CD8-positive, alpha-beta memory T cell (primary cell): ENCODE measurements at regions of chr6 and their contacts with region 1.

Region 1: GRCh38 chr6:116279260-116280063 is at the start of gene TSPYL1:
- DNase-seq: peak; percentile 89 to 98 (median 96)
- H3K4me3 ChIP-seq: peak within 1 kb of the TSS; percentile 90
- H3K4me3 Mint-ChIP-seq: peak within 1 kb of the TSS; percentile 91 to 99 (median 98)
- H3K27ac ChIP-seq: peak within 1 kb of the TSS; percentile 100
- H3K27ac Mint-ChIP-seq: peak within 1 kb of the TSS; percentile 98 to 100 (median 100)
- H3K4me1 ChIP-seq: peaks cover 57% of the 10 kb centered on the region
- H3K4me1 Mint-ChIP-seq: peaks cover 52 to 66% (median 65%) of the 10 kb centered on the region in 3 donors
- H3K27me3 ChIP-seq: no peaks in the 10 kb centered on the region
- H3K27me3 Mint-ChIP-seq: no peaks in the 10 kb centered on the region
- total RNA-seq, gene TSPYL1: 56.6 to 57.4 TPM

Region 2: DNA sequence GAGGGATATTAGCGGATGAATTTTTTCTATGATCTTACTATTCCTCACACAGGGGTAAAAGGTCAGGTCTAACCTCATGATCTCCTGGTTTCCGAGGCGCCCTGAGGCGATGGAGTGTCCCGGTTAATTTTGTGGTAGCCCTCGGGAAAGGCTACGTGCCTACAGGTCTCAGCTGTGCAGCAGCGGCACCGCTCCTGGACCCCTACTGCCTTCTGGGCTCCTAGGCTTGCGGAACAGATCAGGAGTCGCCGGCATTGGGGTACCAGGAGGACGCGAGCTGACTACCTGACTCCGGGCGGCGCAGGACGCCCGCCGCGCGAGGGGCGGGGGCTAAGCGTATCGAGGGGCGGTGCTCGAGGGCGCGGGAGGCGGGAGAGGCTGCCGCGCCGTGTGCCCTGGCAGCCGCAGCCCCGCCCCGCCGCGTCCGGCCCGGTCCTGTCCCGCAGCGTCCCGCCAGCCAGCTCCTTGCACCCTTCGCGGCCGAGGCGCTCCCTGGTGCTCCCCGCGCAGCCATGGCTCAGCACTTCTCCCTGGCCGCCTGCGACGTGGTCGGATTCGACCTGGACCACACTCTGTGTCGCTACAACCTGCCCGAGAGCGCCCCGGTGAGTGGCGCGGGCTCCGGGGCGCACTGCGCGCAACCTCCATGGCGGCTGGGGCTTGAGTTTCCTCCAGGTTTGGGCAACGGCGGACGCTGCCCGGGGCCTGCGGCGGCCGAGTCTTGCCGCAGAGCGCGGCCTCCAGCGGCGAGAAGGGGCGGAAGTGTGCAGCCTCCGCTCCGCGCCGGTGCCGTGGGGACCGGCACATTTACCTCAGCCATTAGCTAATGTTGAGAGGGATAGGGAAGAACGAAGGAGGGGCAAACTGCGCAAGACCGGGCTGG is 178.8 kb before region 1 on chr6 and contains the start of gene NT5DC1:
- CTCF ChIA-PET with region 1: no interaction called
- POLR2A ChIA-PET with region 1: interaction called, 10 read pairs
- DNase-seq: peak; percentile 75 to 87 (median 81)
- H3K4me3 ChIP-seq: peak within 1 kb of the TSS; percentile 75
- H3K4me3 Mint-ChIP-seq: peak within 1 kb of the TSS; percentile 91 to 98 (median 95)
- H3K27ac ChIP-seq: peak within 1 kb of the TSS; percentile 86
- H3K27ac Mint-ChIP-seq: peak within 1 kb of the TSS; percentile 53 to 97 (median 94)
- H3K4me1 ChIP-seq: peaks cover 28% of the 10 kb centered on the region
- H3K4me1 Mint-ChIP-seq: peaks cover 45 to 59% (median 57%) of the 10 kb centered on the region in 3 donors
- H3K27me3 ChIP-seq: no peaks in the 10 kb centered on the region
- H3K27me3 Mint-ChIP-seq: peaks cover 0 to 2% of the 10 kb centered on the region in 2 donors
- total RNA-seq, gene NT5DC1: 46.3 to 47.6 TPM

Region 3: DNA sequence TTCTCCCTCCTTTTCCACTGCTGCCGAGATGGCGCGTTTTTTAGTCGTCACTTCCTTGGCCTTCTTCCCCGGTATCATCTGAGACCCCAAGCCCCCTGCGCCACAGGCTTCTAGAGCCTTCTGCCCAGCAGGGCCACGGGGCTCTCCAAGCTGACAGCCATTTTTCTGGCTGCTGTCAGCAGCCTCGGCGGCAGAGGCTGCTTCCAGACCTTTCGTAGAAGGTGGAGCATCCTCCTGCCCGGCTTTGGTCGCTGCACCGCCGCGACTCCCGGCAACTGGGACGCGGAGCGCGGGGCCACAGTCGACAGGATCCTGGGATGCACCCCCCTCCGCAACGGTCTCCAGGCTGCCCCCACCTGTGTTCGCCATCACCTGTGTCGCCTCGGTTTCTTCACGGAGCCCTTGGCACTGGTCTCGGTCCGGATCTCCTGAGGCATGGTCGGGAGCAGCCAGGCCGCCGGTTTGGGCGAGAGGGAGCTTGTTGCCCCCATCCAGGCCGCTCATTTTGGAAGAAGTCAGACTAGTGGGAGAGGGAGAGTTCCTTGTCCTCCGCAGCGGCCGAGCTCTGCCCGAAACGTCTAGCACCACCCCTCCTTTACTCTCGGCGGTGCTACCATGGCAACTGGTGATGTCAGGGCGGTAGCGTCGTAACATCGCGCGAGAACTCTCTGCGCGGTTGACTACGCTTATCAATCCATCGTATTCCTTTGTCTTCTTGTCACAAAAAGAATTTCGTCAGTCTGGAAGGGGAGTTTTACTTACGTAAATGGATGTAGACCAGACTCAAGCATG is 25.8 kb before region 1 on chr6 and contains the start of gene TSPYL4:
- CTCF ChIA-PET with region 1: interaction called, 14 read pairs
- POLR2A ChIA-PET with region 1: interaction called, 39 read pairs
- DNase-seq: peak; percentile 88 to 96 (median 92)
- H3K4me3 ChIP-seq: peak within 1 kb of the TSS; percentile 87
- H3K4me3 Mint-ChIP-seq: no peak within 1 kb of the TSS
- H3K27ac ChIP-seq: peak within 1 kb of the TSS; percentile 95
- H3K27ac Mint-ChIP-seq: peak within 1 kb of the TSS in 1 of 8 donors; percentile 95
- H3K4me1 ChIP-seq: peaks cover 41% of the 10 kb centered on the region
- H3K4me1 Mint-ChIP-seq: peaks cover 7 to 30% (median 8%) of the 10 kb centered on the region in 3 donors
- H3K27me3 ChIP-seq: no peaks in the 10 kb centered on the region
- H3K27me3 Mint-ChIP-seq: no peaks in the 10 kb centered on the region
- total RNA-seq, gene TSPYL4: 19.3 to 19.9 TPM

Region 4: GRCh38 chr6:116268589-116269293 is 10.7 kb before region 1 on chr6:
- CTCF ChIA-PET with region 1: interaction called, 29 read pairs
- POLR2A ChIA-PET with region 1: interaction called, 19 read pairs
- DNase-seq: peak in 2 of 5 donors; percentile 44 to 48
- H3K4me3 ChIP-seq: no peak overlapping the region
- H3K4me3 Mint-ChIP-seq: no peak overlapping the region
- H3K27ac ChIP-seq: no peak overlapping the region
- H3K27ac Mint-ChIP-seq: peak overlapping the region in 7 of 8 donors; percentile 34 to 77 (median 64)
- H3K4me1 ChIP-seq: no peaks in the 10 kb centered on the region
- H3K4me1 Mint-ChIP-seq: peaks cover 27 to 58% (median 53%) of the 10 kb centered on the region in 3 donors
- H3K27me3 ChIP-seq: no peaks in the 10 kb centered on the region
- H3K27me3 Mint-ChIP-seq: peaks cover 0 to 1% of the 10 kb centered on the region in 2 donors

Region 5: DNA sequence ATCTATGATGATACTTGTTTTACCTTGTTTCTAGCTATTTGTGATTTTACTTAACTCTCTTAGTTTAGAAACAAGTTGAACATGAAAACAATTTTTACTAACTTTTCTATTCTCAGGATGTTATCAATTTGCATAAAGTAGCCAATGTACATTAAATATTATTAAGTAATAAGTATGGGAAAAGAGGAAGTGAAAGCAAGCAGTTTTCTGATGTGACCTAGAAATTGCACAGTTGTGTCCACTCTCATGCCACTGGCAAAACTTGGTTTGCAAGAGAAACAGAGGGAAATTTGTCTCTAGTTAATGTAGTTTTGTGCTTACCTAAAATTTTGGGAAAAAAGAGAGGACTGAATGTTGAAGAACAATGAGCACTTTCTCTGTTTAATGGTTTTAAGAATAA is 19.5 kb after region 1 on chr6:
- CTCF ChIA-PET with region 1: no interaction called
- POLR2A ChIA-PET with region 1: no interaction called
- DNase-seq: no peak
- H3K4me3 ChIP-seq: no peak overlapping the region
- H3K4me3 Mint-ChIP-seq: no peak overlapping the region
- H3K27ac ChIP-seq: no peak overlapping the region
- H3K27ac Mint-ChIP-seq: no peak overlapping the region
- H3K4me1 ChIP-seq: no peaks in the 10 kb centered on the region
- H3K4me1 Mint-ChIP-seq: peaks cover 0 to 3% (median 0%) of the 10 kb centered on the region in 3 donors
- H3K27me3 ChIP-seq: no peaks in the 10 kb centered on the region
- H3K27me3 Mint-ChIP-seq: peaks cover 0 to 1% of the 10 kb centered on the region in 2 donors

Region 6: DNA sequence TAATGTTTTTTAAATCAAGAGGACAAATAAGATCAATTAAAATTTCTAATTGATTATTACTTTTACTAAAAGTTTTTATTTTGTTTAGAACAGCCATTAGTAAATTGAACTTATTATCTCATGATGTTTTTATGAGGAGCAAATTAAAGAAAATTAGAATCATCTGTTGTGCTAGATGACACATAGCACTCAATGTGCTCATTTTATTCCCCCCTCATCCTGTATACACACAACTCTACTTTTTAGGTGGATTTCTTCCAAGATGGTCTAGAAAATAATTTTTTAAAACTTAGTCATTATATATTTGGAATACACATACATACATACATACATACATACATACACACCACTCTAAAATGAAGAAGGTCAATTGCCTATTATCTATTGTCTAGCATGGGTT is 29.5 kb after region 1 on chr6:
- CTCF ChIA-PET with region 1: no interaction called
- POLR2A ChIA-PET with region 1: no interaction called
- DNase-seq: no peak
- H3K4me3 ChIP-seq: no peak overlapping the region
- H3K4me3 Mint-ChIP-seq: no peak overlapping the region
- H3K27ac ChIP-seq: no peak overlapping the region
- H3K27ac Mint-ChIP-seq: no peak overlapping the region
- H3K4me1 ChIP-seq: no peaks in the 10 kb centered on the region
- H3K4me1 Mint-ChIP-seq: no peaks in the 10 kb centered on the region
- H3K27me3 ChIP-seq: no peaks in the 10 kb centered on the region
- H3K27me3 Mint-ChIP-seq: peaks cover 0 to 3% of the 10 kb centered on the region in 2 donors

Region 7: GRCh38 chr6:116570856-116571682 is 291.6 kb after region 1 on chr6 and contains the start of gene RWDD1:
- CTCF ChIA-PET with region 1: interaction called, 5 read pairs
- POLR2A ChIA-PET with region 1: interaction called, 32 read pairs
- DNase-seq: peak; percentile 97 to 99 (median 99)
- H3K4me3 ChIP-seq: peak within 1 kb of the TSS; percentile 99
- H3K4me3 Mint-ChIP-seq: peak within 1 kb of the TSS; percentile 97 to 99 (median 99)
- H3K27ac ChIP-seq: peak within 1 kb of the TSS; percentile 96
- H3K27ac Mint-ChIP-seq: peak within 1 kb of the TSS; percentile 97 to 100 (median 100)
- H3K4me1 ChIP-seq: peaks cover 30% of the 10 kb centered on the region
- H3K4me1 Mint-ChIP-seq: peaks cover 49 to 65% (median 53%) of the 10 kb centered on the region in 3 donors
- H3K27me3 ChIP-seq: no peaks in the 10 kb centered on the region
- H3K27me3 Mint-ChIP-seq: peaks cover 0 to 1% of the 10 kb centered on the region in 2 donors
- total RNA-seq, gene RWDD1: 54.6 to 56.2 TPM

Region 8: DNA sequence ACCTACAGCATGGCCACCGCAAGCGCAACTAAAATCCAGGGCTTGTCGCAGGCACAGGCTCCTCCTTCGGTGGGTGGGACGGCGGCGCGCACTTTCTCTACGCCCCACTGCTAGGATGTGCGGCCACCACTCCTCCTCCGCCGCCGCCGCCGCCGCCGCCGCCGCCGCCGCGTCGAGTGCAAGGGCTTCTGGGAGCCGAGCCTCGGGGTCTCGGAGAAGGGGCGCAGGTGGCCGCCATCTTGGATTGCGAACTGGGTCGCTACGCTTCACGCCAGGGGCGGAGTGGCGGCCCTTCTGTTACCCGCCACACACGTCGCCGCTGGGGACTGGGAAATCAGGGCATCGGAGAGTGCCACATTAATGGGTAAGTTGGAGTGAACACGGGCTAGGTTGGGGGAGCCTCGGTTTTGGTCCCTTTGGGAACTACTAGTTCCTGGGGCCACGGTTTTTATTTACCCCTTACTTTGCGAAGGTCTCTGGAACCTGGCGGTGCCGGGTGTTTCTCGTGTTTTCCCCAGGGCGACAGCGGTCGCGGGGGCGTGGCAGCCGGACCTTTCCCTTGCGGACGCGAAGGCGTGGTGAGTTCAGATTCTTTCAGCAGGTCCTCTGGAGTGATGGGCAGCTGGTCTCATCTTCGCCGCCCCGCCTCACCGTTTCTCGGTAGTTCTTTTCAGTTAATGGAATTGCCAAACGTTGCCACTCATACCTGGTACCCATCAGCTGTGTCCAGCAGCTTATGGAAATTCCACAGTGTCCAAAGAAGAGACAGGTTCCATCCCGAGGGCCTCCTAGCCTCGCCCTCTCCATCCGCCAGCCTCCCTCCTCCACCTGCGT is 401.7 kb after region 1 on chr6 and contains the start of gene KPNA5:
- CTCF ChIA-PET with region 1: no interaction called
- POLR2A ChIA-PET with region 1: interaction called, 18 read pairs
- DNase-seq: peak; percentile 87 to 94 (median 88)
- H3K4me3 ChIP-seq: peak within 1 kb of the TSS; percentile 94
- H3K4me3 Mint-ChIP-seq: peak within 1 kb of the TSS; percentile 95 to 99 (median 98)
- H3K27ac ChIP-seq: peak within 1 kb of the TSS; percentile 80
- H3K27ac Mint-ChIP-seq: peak within 1 kb of the TSS; percentile 91 to 100 (median 99)
- H3K4me1 ChIP-seq: peaks cover 16% of the 10 kb centered on the region
- H3K4me1 Mint-ChIP-seq: peaks cover 48 to 58% (median 54%) of the 10 kb centered on the region in 3 donors
- H3K27me3 ChIP-seq: no peaks in the 10 kb centered on the region
- H3K27me3 Mint-ChIP-seq: no peaks in the 10 kb centered on the region
- total RNA-seq, gene KPNA5: 11.3 to 13.5 TPM

Region 9: DNA sequence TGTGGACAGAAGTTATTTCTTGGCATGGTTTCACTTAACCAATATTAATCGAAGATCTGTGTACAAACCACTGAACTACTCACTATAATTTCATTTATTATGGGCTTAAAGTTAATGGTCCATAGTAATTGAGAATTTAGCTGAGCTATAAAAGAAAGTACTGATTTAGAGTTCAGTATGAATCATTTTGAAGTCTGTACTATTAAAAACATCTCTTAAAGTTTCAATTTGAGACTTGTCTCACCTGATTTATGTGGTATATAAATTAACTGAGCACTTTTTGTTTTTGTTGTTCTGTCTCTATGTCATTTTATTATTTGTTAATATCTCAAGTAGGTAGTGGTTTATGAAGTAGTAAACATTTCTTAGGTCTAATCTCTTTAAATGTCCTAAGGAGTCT is 426.5 kb after region 1 on chr6:
- CTCF ChIA-PET with region 1: no interaction called
- POLR2A ChIA-PET with region 1: no interaction called
- DNase-seq: no peak
- H3K4me3 ChIP-seq: no peak overlapping the region
- H3K4me3 Mint-ChIP-seq: no peak overlapping the region
- H3K27ac ChIP-seq: no peak overlapping the region
- H3K27ac Mint-ChIP-seq: no peak overlapping the region
- H3K4me1 ChIP-seq: no peaks in the 10 kb centered on the region
- H3K4me1 Mint-ChIP-seq: peaks cover 7 to 18% (median 11%) of the 10 kb centered on the region in 3 donors
- H3K27me3 ChIP-seq: no peaks in the 10 kb centered on the region
- H3K27me3 Mint-ChIP-seq: no peaks in the 10 kb centered on the region